ENCODE measurements at regions of chr6 and their contacts with region 1.

Region 1: GRCh38 chr6:43758617-43759050 is 11.4 kb upstream of the VEGFA start:
- DNase-seq: peak; percentile 68
- CTCF ChIP-seq: peak; percentile 77

Region 2: GRCh38 chr6:43723737-43724295 is 34.8 kb before region 1 on chr6:
- CTCF ChIA-PET with region 1: interaction called, 11 read pairs
- POLR2A ChIA-PET with region 1: no interaction called
- DNase-seq: peak; percentile 82
- CTCF ChIP-seq: peak; percentile 65